Panc1 (cell line): ENCODE measurements at regions of chr5 and their contacts with region 1.

Region 1: GRCh38 chr5:149485655-149486425 is 65.4 kb downstream of the CSNK1A1 start:
- DNase-seq: peak; percentile 99
- ATAC-seq: peak; percentile 87
- H3K4me3 ChIP-seq: peak overlapping the region in 1 of 2 experiments; percentile 13; a peak in 1 of 4 replicates
- H3K27ac ChIP-seq: peak overlapping the region; percentile 94
- H3K4me1 ChIP-seq: peaks cover 73% of the 10 kb centered on the region
- H3K27me3 ChIP-seq: no peaks in the 10 kb centered on the region
- CTCF ChIP-seq: no peak

Region 2: GRCh38 chr5:149448831-149449714 is 36.8 kb before region 1 on chr5:
- CTCF ChIA-PET with region 1: interaction called, 3 read pairs
- POLR2A ChIA-PET with region 1: interaction called, 4 read pairs
- in situ Hi-C with region 1: no loop called
- intact Hi-C with region 1: loop called (anchors 5 kb)
- DNase-seq: no peak
- ATAC-seq: no peak
- H3K4me3 ChIP-seq: no peak overlapping the region
- H3K27ac ChIP-seq: peak overlapping the region; percentile 76
- H3K4me1 ChIP-seq: peaks cover 55% of the 10 kb centered on the region
- H3K27me3 ChIP-seq: no peaks in the 10 kb centered on the region
- CTCF ChIP-seq: peak; percentile 83; the same call in 1 of the 2 replicates

Region 3: DNA sequence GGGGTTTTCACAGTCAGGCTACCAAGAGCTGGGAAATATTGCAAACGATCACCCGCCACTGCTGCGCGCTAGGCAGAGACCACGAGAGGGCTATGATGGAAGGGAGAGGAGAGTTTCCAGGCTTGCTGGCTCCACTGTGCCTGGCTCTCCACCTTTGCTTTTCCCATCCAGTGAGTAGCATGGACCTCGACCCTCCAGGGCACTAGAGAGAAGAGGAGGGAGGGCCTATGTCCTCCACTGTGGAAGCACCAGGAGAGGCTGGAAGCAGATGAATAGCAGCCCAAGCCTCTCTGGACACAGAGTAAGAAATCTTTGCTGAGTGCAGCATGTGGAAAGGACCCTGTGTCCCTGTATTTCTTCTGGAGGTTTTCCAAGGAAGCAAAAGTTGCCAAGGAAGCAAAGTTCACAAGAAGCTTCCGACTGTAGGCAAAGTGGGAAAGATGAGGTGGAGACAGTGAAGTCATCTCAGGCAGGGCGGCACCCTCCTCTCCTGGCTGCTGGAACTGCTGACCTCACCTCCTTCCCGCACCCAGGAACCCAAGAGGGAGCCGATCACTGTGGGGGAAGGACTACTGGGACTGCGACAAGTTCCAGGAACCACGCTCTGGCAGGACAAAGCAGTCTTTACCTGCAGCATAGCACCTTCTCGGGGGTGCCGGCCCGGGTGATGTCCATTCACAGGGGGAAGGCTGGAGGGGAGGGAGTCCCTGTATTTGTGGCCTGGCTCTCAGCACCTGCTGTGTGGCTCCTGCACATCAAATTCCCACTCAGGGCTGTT is 14.2 kb before region 1 on chr5:
- CTCF ChIA-PET with region 1: interaction called, 11 read pairs
- POLR2A ChIA-PET with region 1: no interaction called
- in situ Hi-C with region 1: no loop called
- intact Hi-C with region 1: no loop called
- DNase-seq: no peak
- ATAC-seq: peak; percentile 77
- H3K4me3 ChIP-seq: no peak overlapping the region
- H3K27ac ChIP-seq: peak overlapping the region; percentile 68
- H3K4me1 ChIP-seq: peaks cover 14% of the 10 kb centered on the region
- H3K27me3 ChIP-seq: no peaks in the 10 kb centered on the region
- CTCF ChIP-seq: no peak

Region 4: GRCh38 chr5:149596713-149597112 is 110.9 kb after region 1 on chr5:
- CTCF ChIA-PET with region 1: no interaction called
- POLR2A ChIA-PET with region 1: no interaction called
- in situ Hi-C with region 1: no loop called
- intact Hi-C with region 1: no loop called
- DNase-seq: no peak
- ATAC-seq: no peak
- H3K4me3 ChIP-seq: no peak overlapping the region
- H3K27ac ChIP-seq: no peak overlapping the region
- H3K4me1 ChIP-seq: no peaks in the 10 kb centered on the region
- H3K27me3 ChIP-seq: no peaks in the 10 kb centered on the region
- CTCF ChIP-seq: no peak